Ascending aorta (tissue), 2 donors: ENCODE measurements at regions of chr20 and their contacts with region 1.

Region 1: DNA sequence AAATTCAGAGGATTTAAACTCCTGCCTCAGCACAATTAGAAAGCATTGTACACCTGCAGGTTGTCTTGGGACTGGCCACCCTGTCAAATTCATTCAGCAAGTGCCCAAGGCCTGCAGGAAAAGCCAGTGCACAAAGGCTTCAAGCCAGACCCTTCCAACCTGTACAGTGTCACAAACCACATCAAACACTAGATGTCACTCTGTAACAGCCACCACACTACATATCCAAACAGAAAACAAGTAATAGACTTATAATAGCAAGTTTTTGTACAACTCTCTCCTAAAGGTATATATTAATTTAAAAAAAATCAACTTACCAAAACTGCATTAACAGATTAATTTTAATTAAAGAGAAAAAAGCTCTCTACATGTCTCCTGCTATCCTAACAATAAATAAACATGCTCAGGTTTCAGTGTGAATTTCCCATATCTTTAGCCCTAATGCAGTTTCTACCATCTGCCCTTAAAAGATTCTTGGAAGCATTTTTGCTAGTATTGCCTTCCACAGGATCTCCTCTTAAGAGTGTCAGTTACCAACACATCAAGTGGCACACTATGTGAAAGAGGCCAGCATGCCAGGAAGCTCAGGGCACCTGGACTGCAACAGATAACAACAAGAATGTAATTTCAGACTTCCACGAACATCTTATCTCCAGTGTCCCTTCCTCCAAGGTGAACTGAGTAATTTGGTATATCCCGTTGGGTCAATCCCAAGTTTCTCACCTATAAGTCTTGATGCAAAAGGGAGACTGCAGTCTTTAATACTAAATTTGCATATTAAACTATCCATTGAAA is 47.5 kb downstream of the RALGAPA2 start:
- DNase-seq: no peak
- H3K4me3 ChIP-seq: no peak overlapping the region
- H3K27ac ChIP-seq: no peak overlapping the region
- H3K4me1 ChIP-seq: no peaks in the 10 kb centered on the region
- H3K27me3 ChIP-seq: no peaks in the 10 kb centered on the region
- CTCF ChIP-seq: peak; percentile 17 to 52 (median 35)

Region 2: GRCh38 chr20:20407891-20408805 is 256.8 kb before region 1 on chr20:
- intact Hi-C with region 1: no loop called
- DNase-seq: no peak
- H3K4me3 ChIP-seq: no peak overlapping the region
- H3K27ac ChIP-seq: no peak overlapping the region
- H3K4me1 ChIP-seq: no peaks in the 10 kb centered on the region
- H3K27me3 ChIP-seq: no peaks in the 10 kb centered on the region
- CTCF ChIP-seq: no peak

Region 3: GRCh38 chr20:20824924-20825584 is 160.1 kb after region 1 on chr20:
- intact Hi-C with region 1: loop called (anchors 2 kb)
- DNase-seq: no peak
- H3K4me3 ChIP-seq: no peak overlapping the region
- H3K27ac ChIP-seq: no peak overlapping the region
- H3K4me1 ChIP-seq: no peaks in the 10 kb centered on the region
- H3K27me3 ChIP-seq: no peaks in the 10 kb centered on the region
- CTCF ChIP-seq: peak; percentile 49 to 77 (median 65)